SK-N-SH (cell line): ENCODE measurements at regions of chrX and their contacts with region 1.

Region 1: GRCh38 chrX:47556045-47556623 is 4.9 kb upstream of the ARAF start:
- DNase-seq: peak; percentile 80
- H3K4me3 ChIP-seq: peak overlapping the region; percentile 52
- H3K27ac ChIP-seq: peak overlapping the region; percentile 50 to 74
- H3K4me1 ChIP-seq: peaks cover 0 to 3% of the 10 kb centered on the region in 2 experiments; a peak in 1 of 4 replicates
- H3K27me3 ChIP-seq: no peaks in the 10 kb centered on the region; the same call in 1 of the 2 replicates
- CTCF ChIP-seq: no peak
- EP300 ChIP-seq: no peak
- RAD21 ChIP-seq: no peak

Region 2: DNA sequence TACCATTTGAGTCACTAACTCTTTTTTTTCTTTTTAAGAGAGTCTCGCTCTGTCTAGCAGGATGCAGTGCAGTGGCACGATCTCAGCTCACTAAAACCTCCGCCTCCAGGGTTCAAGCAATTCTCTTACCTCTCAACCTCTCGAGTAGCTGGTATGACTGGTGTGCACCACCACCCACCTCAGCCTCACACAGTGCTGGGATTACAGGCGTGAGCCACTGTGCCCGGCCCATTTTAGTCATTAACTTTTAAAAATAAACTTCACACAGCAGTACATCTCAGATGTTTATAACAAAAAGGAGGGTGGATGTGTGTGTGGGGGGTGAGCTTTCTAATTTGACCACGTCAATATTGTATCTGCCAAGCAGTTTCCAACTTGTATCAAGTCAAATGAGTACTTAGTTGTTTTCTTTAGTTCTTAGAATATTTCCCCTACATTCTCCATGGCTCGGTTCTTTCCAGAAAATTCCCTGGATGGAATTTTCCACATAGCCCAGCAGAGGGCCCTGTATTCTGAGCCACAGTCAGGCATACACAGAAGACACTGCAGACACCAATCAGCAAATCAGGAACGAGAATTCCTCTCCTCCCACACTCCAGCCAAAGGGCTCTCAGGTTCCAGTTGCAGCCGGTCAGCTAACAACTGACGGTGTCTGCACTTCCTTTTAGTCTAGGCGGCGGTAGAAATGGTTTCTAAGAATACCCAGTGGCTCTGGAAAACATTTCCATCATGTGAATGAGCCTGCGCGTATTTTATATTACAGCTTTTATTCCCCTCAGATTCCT is 15.2 kb before region 1 on chrX:
- CTCF ChIA-PET with region 1: interaction called, 12 read pairs
- POLR2A ChIA-PET with region 1: interaction called, 6 read pairs
- DNase-seq: peak; percentile 80
- H3K4me3 ChIP-seq: no peak overlapping the region; a peak in 1 of 4 replicates
- H3K27ac ChIP-seq: peak overlapping the region; percentile 56 to 64; a peak in 3 of 4 replicates
- H3K4me1 ChIP-seq: peaks cover 0 to 6% of the 10 kb centered on the region in 2 experiments; a peak in 1 of 4 replicates
- H3K27me3 ChIP-seq: no peaks in the 10 kb centered on the region
- CTCF ChIP-seq: peak; percentile 82
- EP300 ChIP-seq: peak in 1 of 2 experiments; percentile 57; a peak in 1 of 4 replicates
- RAD21 ChIP-seq: peak; percentile 70